ENCODE measurements at regions of chr2 and their contacts with region 1.

Region 1: GRCh38 chr2:42086500-42086953 is 38.7 kb downstream of the PKDCC start:
- DNase-seq: peak; percentile 76
- ATAC-seq: peak; percentile 89
- H3K4me3 ChIP-seq: peak overlapping the region; percentile 6 to 51 (median 20); a peak in 3 of 6 replicates
- H3K27ac ChIP-seq: no peak overlapping the region
- H3K4me1 ChIP-seq: peaks cover 65% of the 10 kb centered on the region
- H3K27me3 ChIP-seq: peaks cover 0 to 6% of the 10 kb centered on the region in 2 experiments; a peak in 1 of 5 replicates
- CTCF ChIP-seq: peak; percentile 94
- EP300 ChIP-seq: no peak
- POLR2A ChIP-seq: no peak
- RAD21 ChIP-seq: peak; percentile 97

Region 2: GRCh38 chr2:40488101-40488601 is 1598.4 kb before region 1 on chr2:
- CTCF ChIA-PET with region 1: no interaction called
- POLR2A ChIA-PET with region 1: no interaction called
- in situ Hi-C with region 1: no loop called
- intact Hi-C with region 1: loop called (anchors 5 kb)
- DNase-seq: peak; percentile 33
- ATAC-seq: peak; percentile 66
- H3K4me3 ChIP-seq: no peak overlapping the region
- H3K27ac ChIP-seq: no peak overlapping the region
- H3K4me1 ChIP-seq: peaks cover 9% of the 10 kb centered on the region; the same call in 1 of the 2 replicates
- H3K27me3 ChIP-seq: no peaks in the 10 kb centered on the region
- CTCF ChIP-seq: peak; percentile 25; the same call in 1 of the 2 replicates
- EP300 ChIP-seq: no peak
- POLR2A ChIP-seq: no peak
- RAD21 ChIP-seq: no peak

Region 3: GRCh38 chr2:41806286-41806685 is 280.2 kb before region 1 on chr2:
- CTCF ChIA-PET with region 1: interaction called, 7 read pairs
- POLR2A ChIA-PET with region 1: no interaction called
- in situ Hi-C with region 1: no loop called
- intact Hi-C with region 1: loop called (anchors 1 kb)
- DNase-seq: peak; percentile 12
- ATAC-seq: peak; percentile 53; the same call in 2 of the 3 replicates
- H3K4me3 ChIP-seq: no peak overlapping the region
- H3K27ac ChIP-seq: no peak overlapping the region
- H3K4me1 ChIP-seq: no peaks in the 10 kb centered on the region
- H3K27me3 ChIP-seq: no peaks in the 10 kb centered on the region
- CTCF ChIP-seq: peak; percentile 52
- EP300 ChIP-seq: no peak
- POLR2A ChIP-seq: no peak
- RAD21 ChIP-seq: peak; percentile 46; the same call in 1 of the 2 replicates

Region 4: DNA sequence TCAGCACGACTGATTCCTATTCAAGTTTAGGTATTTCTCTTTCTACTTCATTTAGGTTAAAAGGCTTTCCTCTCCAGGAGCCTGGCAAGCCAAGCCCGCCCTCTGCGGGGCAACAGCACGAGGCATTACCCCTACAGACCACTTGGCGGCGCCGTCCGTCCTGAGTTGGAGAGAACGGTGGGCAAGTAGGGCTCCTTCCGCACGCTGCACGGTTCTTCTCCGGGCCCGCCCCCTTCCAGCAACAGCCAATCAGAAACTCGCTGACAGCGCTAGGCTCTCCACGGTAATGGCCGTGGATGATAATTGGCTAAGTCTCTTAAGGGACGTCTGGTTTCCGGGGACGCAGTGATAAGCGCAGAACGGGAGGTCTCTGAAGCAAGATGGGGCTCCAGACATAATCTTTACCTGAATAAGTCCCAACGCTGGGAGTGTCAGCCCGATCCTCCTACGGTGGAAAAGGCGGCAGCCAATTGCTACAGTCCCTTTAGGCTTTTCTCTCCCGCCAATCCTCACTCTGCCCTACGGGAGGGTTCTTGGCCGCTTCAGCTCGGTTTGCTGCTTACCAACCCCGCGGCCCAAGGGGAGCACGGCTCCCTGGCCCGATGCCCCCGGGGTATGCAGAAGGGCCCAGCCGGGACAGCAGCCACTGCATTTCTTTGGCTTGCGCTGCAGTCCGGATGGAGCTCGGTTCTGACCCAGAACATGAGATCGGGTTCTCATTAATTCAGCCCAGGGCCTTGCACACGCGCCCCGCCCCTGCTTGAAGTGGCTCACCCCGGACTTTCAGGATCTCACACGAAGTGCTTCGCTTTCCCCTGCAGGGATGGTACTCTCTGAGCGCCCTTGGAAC is 245.6 kb before region 1 on chr2:
- CTCF ChIA-PET with region 1: interaction called, 13 read pairs
- POLR2A ChIA-PET with region 1: no interaction called
- in situ Hi-C with region 1: no loop called
- intact Hi-C with region 1: loop called (anchors 1 kb)
- DNase-seq: peak; percentile 96
- ATAC-seq: peak; percentile 99
- H3K4me3 ChIP-seq: peak overlapping the region; percentile 64 to 80 (median 75)
- H3K27ac ChIP-seq: peak overlapping the region; percentile 59
- H3K4me1 ChIP-seq: peaks cover 23% of the 10 kb centered on the region
- H3K27me3 ChIP-seq: no peaks in the 10 kb centered on the region; a peak in 1 of 5 replicates
- CTCF ChIP-seq: peak; percentile 100
- EP300 ChIP-seq: peak; percentile 50 to 54; a peak in 2 of 4 replicates
- POLR2A ChIP-seq: peak; percentile 81 to 85
- RAD21 ChIP-seq: peak; percentile 99

Region 5: GRCh38 chr2:41853427-41854216 is 232.9 kb before region 1 on chr2:
- CTCF ChIA-PET with region 1: interaction called, 87 read pairs
- POLR2A ChIA-PET with region 1: interaction called, 9 read pairs
- in situ Hi-C with region 1: no loop called
- intact Hi-C with region 1: loop called (anchors 1 kb)
- DNase-seq: peak; percentile 71
- ATAC-seq: peak; percentile 72
- H3K4me3 ChIP-seq: no peak overlapping the region
- H3K27ac ChIP-seq: no peak overlapping the region
- H3K4me1 ChIP-seq: peaks cover 20% of the 10 kb centered on the region
- H3K27me3 ChIP-seq: 0 out of 5 replicates have a peak, but pooled peaks cover 0 to 6% of the 10 kb centered on the region in 2 experiments
- CTCF ChIP-seq: peak; percentile 87
- EP300 ChIP-seq: no peak; a peak in 1 of 4 replicates
- POLR2A ChIP-seq: no peak
- RAD21 ChIP-seq: peak; percentile 81

Region 6: GRCh38 chr2:42053791-42054701 is 32.5 kb before region 1 on chr2:
- CTCF ChIA-PET with region 1: interaction called, 7 read pairs
- POLR2A ChIA-PET with region 1: interaction called, 29 read pairs
- in situ Hi-C with region 1: no loop called
- intact Hi-C with region 1: loop called (anchors 2 kb)
- DNase-seq: peak; percentile 55
- ATAC-seq: peak; percentile 28
- H3K4me3 ChIP-seq: peak overlapping the region in 1 of 3 experiments; percentile 32; a peak in 2 of 6 replicates
- H3K27ac ChIP-seq: peak overlapping the region; percentile 39
- H3K4me1 ChIP-seq: peaks cover 91% of the 10 kb centered on the region
- H3K27me3 ChIP-seq: peaks cover 0 to under 1% of the 10 kb centered on the region in 2 experiments; a peak in 1 of 5 replicates
- CTCF ChIP-seq: 0 out of 2 replicates have a peak, but pooled peaks have one; percentile 8
- EP300 ChIP-seq: peak in 1 of 2 experiments; percentile 75; a peak in 2 of 4 replicates
- POLR2A ChIP-seq: no peak
- RAD21 ChIP-seq: no peak

Region 7: DNA sequence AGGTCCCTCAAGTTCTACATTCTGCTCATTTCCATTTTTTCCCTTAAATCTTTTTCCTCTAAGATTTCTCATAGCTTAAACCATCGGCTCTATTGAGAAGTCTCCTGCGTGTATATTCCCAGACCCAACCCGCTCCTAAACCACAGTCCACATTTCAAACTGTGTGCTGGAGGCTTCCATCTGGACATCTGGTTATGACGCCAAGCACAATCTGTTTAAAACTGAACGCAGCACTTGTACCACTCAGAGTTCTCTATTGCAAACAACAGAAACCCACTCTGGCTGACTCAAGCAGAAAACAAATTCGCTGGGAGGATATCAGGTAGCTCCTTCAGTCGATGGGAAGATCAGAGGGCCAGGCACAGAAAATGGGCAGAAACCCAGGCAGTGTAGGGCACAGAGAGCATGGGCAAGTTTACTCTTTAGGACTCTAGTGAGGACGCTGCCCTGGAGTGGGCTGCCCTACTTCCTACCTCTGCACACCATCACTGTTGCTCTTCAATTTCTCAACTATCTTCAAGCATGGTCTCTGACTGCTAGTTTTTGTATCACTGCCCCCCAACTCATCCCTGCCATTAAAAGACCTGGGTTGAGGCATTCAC is 77.0 kb after region 1 on chr2:
- CTCF ChIA-PET with region 1: no interaction called
- POLR2A ChIA-PET with region 1: no interaction called
- in situ Hi-C with region 1: no loop called
- intact Hi-C with region 1: no loop called
- DNase-seq: no peak
- ATAC-seq: peak; percentile 44
- H3K4me3 ChIP-seq: no peak overlapping the region
- H3K27ac ChIP-seq: no peak overlapping the region
- H3K4me1 ChIP-seq: peaks cover 48% of the 10 kb centered on the region
- H3K27me3 ChIP-seq: no peaks in the 10 kb centered on the region
- CTCF ChIP-seq: no peak
- EP300 ChIP-seq: no peak
- POLR2A ChIP-seq: no peak
- RAD21 ChIP-seq: no peak